Breast epithelium (tissue), 4 donors: ENCODE measurements at regions of chr20 and their contacts with region 1.

Region 1: DNA sequence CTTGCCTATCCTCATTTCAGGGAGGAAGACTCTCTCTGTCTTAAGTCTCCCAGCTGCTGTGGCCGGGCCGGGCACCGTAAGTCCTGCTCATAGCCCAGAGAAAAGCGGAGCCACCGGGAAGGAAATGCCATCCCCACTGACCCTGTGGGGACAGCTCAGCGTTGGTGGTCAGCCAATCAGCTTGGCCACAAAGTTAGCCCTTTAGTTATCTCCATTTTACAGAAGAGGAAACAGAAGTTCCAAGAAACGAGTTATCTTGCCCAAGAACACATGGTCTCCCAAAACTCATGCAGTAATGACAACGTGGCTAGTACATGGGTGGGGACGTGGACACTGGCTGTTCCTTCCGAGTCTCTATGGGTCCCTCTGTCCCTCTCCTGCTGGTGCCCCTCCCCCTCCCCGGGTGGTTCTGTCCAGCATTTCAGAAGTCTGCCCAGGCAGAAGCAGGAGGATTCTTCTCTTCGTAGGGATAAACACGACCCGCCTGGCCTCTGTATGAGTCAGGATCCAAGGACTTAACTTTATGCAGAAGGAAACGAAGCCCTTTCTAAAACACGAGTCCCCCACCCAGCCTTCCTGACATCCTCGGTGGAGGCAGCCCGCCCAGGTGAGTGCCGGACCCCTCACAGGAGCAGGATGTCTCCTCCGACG is 273.8 kb downstream of the CDH4 start:
- DNase-seq: no peak
- H3K4me3 ChIP-seq: no peak overlapping the region
- H3K27ac ChIP-seq: no peak overlapping the region
- H3K4me1 ChIP-seq: no peaks in the 10 kb centered on the region
- H3K27me3 ChIP-seq: peaks cover 0 to 18% of the 10 kb centered on the region in 2 donors
- CTCF ChIP-seq: no peak
- POLR2A ChIP-seq: no peak

Region 2: DNA sequence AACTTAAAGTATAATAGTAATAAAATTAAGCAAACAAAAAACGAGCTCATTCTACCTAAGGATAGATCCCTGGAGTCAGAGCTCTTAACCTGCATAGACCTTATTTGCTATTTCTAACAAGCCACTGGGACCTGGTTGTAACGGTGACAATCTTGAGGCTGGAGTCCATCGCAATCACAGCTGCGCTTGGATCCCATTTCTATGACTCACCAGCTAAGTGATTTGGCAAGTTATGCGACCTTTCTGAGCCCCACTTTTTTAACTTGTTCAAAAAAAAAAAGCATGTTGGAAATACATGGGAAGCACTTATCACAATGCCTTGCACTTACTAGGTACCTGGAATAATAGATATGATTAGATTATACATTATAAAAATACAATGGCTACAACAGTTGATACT is 663.3 kb before region 1 on chr20:
- intact Hi-C with region 1: loop called (anchors 5 kb)
- DNase-seq: no peak
- H3K4me3 ChIP-seq: no peak overlapping the region
- H3K27ac ChIP-seq: no peak overlapping the region
- H3K4me1 ChIP-seq: no peaks in the 10 kb centered on the region
- H3K27me3 ChIP-seq: peaks cover 0 to 7% of the 10 kb centered on the region in 2 donors
- CTCF ChIP-seq: no peak
- POLR2A ChIP-seq: no peak